ENCODE measurements at regions of chr10 and their contacts with region 1.

Region 1: GRCh38 chr10:114304017-114304570 is 65.0 kb downstream of the VWA2 start:
- DNase-seq: peak; percentile 74
- H3K4me3 Mint-ChIP-seq: peak overlapping the region; percentile 51
- H3K27ac Mint-ChIP-seq: no peak overlapping the region
- H3K4me1 Mint-ChIP-seq: no peaks in the 10 kb centered on the region
- H3K27me3 Mint-ChIP-seq: no peaks in the 10 kb centered on the region
- CTCF ChIP-seq: peak; percentile 45

Region 2: DNA sequence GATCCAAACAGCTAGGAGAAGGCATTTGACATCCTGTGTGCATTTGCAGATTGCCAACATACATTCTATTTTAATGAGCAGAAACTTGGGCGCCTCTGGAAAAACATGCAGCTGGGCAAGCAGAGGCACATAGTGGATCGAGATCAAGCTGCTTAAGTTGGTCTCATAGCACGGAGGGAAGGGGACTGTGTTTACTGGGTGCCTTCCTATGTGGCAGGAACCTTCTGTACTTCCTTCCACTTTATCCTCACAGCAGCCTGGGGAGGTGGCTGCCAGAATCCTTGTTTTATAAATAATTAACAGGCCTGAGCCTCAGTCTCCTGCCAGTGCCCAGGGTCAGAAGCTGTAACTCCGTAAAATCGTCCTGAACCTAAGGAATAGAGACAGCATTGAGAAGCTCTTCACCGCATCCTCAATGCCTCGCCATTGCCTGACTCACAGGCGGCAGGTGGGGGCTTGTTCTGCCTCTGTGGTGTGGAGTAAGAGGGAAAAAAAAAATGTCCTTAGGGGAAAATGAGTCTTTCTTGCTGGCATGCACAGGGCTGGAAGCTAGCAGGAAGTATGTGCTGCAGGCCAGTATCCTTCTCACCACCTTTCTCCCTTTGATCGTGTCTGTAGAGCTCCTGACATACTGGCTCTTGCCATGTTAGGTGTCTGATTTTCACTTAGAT is 58.8 kb before region 1 on chr10:
- CTCF ChIA-PET with region 1: interaction called, 12 read pairs
- intact Hi-C with region 1: no loop called
- DNase-seq: peak; percentile 18
- H3K4me3 Mint-ChIP-seq: peak overlapping the region; percentile 39
- H3K27ac Mint-ChIP-seq: peak overlapping the region; percentile 40
- H3K4me1 Mint-ChIP-seq: peaks cover 31% of the 10 kb centered on the region
- H3K27me3 Mint-ChIP-seq: peaks cover 18% of the 10 kb centered on the region
- CTCF ChIP-seq: no peak

Region 3: GRCh38 chr10:114279898-114280644 is 24.0 kb before region 1 on chr10:
- CTCF ChIA-PET with region 1: no interaction called
- intact Hi-C with region 1: no loop called
- DNase-seq: no peak
- H3K4me3 Mint-ChIP-seq: no peak overlapping the region
- H3K27ac Mint-ChIP-seq: no peak overlapping the region
- H3K4me1 Mint-ChIP-seq: no peaks in the 10 kb centered on the region
- H3K27me3 Mint-ChIP-seq: no peaks in the 10 kb centered on the region
- CTCF ChIP-seq: no peak

Region 4: DNA sequence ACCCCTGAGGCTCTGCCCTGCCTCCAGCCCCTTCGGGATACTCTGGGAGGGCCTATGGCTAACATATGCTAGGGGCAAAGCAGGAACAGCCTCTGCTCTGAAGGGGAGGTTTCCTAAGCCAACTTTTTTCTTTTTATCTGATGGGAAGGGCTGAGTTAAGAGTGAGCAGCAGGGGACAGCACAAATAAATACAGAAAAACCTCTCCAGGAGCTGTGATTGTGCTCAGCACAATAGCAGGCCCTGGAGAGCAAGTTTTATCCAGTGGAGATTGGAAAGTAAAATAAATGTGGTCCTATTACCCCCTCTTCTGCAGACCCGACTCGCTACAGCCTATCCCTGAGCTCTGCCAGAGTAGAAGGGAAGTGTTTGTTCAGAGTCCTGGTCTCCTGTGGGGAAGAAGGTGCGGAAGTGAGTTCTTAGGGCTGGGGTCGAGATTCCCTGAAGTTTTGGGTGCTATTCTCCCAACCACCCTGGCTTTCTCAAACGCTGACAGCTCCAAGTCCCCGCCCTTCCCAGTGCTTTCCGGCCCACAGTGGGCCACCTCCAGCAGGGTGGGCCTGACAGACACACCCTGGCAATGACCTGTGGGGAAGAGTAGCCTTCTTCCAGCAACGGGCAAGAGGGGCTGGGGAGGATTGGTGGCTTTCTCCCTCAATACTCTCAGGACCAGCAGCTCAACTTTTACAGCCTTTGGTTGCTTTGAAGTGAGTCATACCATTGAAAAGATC is 123.2 kb after region 1 on chr10:
- CTCF ChIA-PET with region 1: interaction called, 11 read pairs
- intact Hi-C with region 1: loop called (anchors 5 kb)
- DNase-seq: no peak
- H3K4me3 Mint-ChIP-seq: no peak overlapping the region
- H3K27ac Mint-ChIP-seq: no peak overlapping the region
- H3K4me1 Mint-ChIP-seq: no peaks in the 10 kb centered on the region
- H3K27me3 Mint-ChIP-seq: no peaks in the 10 kb centered on the region
- CTCF ChIP-seq: no peak

Region 5: GRCh38 chr10:114458955-114459354 is 154.9 kb after region 1 on chr10:
- CTCF ChIA-PET with region 1: interaction called, 15 read pairs
- intact Hi-C with region 1: no loop called
- DNase-seq: peak; percentile 41
- H3K4me3 Mint-ChIP-seq: no peak overlapping the region
- H3K27ac Mint-ChIP-seq: no peak overlapping the region
- H3K4me1 Mint-ChIP-seq: no peaks in the 10 kb centered on the region
- H3K27me3 Mint-ChIP-seq: no peaks in the 10 kb centered on the region
- CTCF ChIP-seq: peak; percentile 26

Region 6: GRCh38 chr10:114703377-114704107 is 399.4 kb after region 1 on chr10:
- CTCF ChIA-PET with region 1: no interaction called
- intact Hi-C with region 1: loop called (anchors 10 kb)
- DNase-seq: no peak
- H3K4me3 Mint-ChIP-seq: no peak overlapping the region
- H3K27ac Mint-ChIP-seq: no peak overlapping the region
- H3K4me1 Mint-ChIP-seq: peaks cover 6% of the 10 kb centered on the region
- H3K27me3 Mint-ChIP-seq: no peaks in the 10 kb centered on the region
- CTCF ChIP-seq: peak; percentile 55